ENCODE measurements at regions of chr7 and their contacts with region 1.

Region 1: DNA sequence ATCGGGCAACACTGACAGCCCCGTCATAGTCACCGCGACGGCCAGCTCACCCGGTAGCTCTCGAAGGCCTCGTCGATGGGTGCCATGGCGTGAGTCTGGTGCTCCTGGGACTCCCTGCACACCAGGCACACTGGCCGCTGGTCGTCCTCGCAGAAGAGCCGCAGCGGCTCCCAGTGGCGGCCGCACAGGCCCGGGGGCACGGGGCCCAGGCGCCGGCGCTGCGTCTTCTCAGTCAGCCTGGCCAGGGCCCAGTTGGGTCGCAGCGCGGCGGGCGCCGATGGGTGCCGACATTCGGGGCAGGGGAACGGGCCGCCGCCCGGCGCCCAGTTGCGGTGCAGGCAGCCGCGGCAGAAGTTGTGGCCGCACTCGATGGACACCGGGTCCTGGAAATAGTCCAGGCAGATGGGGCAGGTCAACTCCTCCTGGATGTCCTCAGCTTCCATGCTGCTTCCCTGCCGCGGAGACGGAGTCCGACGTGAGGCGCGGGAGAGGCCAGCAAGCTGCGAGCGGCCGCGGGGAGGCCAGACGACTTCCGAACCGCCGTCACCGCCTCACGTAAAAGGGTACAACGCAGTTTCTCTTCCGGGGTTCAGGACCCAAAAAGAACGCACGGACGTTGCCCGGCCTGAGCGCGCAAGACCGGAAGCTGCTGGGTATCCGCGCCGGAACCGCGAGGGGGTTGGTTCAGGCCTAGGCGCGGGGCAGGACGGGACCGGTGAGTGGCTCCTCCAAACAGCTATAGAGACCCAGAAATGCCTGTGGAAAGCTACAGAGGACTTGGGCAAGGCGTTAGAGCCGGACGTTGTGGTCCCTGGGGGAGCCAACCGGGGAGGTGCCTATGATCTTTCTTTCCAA is at the start of gene TRIM4:
- DNase-seq: peak; percentile 78 to 95 (median 86)
- ATAC-seq: peak; percentile 97
- H3K4me3 ChIP-seq: peak within 1 kb of the TSS; percentile 80
- H3K4me3 Mint-ChIP-seq: peak within 1 kb of the TSS; percentile 97
- H3K27ac ChIP-seq: peak within 1 kb of the TSS; percentile 78 to 80
- H3K27ac Mint-ChIP-seq: peak within 1 kb of the TSS; percentile 98
- H3K4me1 ChIP-seq: peaks cover 39% of the 10 kb centered on the region
- H3K4me1 Mint-ChIP-seq: peaks cover 61% of the 10 kb centered on the region
- H3K27me3 ChIP-seq: no peaks in the 10 kb centered on the region
- H3K27me3 Mint-ChIP-seq: no peaks in the 10 kb centered on the region
- CTCF ChIP-seq: peak; percentile 13
- total RNA-seq, gene TRIM4: 22.8 to 23.1 TPM

Region 2: GRCh38 chr7:99558306-99559174 is 360.6 kb before region 1 on chr7 and contains the start of gene ZNF655:
- CTCF ChIA-PET with region 1: no interaction called
- POLR2A ChIA-PET with region 1: interaction called, 26 read pairs
- intact Hi-C with region 1: no loop called
- DNase-seq: peak; percentile 83 to 96 (median 88)
- ATAC-seq: peak; percentile 79
- H3K4me3 ChIP-seq: peak within 1 kb of the TSS; percentile 98
- H3K4me3 Mint-ChIP-seq: peak within 1 kb of the TSS; percentile 93
- H3K27ac ChIP-seq: peak within 1 kb of the TSS; percentile 95 to 96
- H3K27ac Mint-ChIP-seq: peak within 1 kb of the TSS; percentile 95
- H3K4me1 ChIP-seq: peaks cover 45% of the 10 kb centered on the region
- H3K4me1 Mint-ChIP-seq: peaks cover 58% of the 10 kb centered on the region
- H3K27me3 ChIP-seq: no peaks in the 10 kb centered on the region
- H3K27me3 Mint-ChIP-seq: no peaks in the 10 kb centered on the region
- CTCF ChIP-seq: no peak
- total RNA-seq, gene ZNF655: 145 to 146 TPM

Region 3: DNA sequence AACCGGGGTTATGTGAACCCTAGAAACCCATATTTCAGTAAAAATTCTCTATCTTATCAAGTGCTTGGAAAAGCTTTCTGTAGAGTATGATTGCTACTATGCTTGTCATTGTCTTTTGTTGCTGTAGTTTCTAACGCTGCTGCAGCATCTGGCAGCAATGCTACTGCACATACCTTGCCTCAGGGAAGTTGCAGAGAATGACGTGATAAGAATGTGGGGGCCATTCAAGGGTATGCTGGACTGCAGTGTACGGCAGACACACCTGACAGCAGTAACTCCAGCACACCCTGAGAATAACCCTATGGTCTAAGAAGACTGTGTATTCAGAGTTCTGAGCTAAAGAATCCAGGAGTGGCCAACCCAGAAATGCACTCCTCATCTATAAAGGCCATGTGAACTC is 20.4 kb before region 1 on chr7:
- CTCF ChIA-PET with region 1: no interaction called
- POLR2A ChIA-PET with region 1: no interaction called
- intact Hi-C with region 1: no loop called
- DNase-seq: no peak
- ATAC-seq: no peak
- H3K4me3 ChIP-seq: no peak overlapping the region
- H3K4me3 Mint-ChIP-seq: no peak overlapping the region
- H3K27ac ChIP-seq: no peak overlapping the region
- H3K27ac Mint-ChIP-seq: no peak overlapping the region
- H3K4me1 ChIP-seq: peaks cover 7% of the 10 kb centered on the region
- H3K4me1 Mint-ChIP-seq: no peaks in the 10 kb centered on the region
- H3K27me3 ChIP-seq: no peaks in the 10 kb centered on the region
- H3K27me3 Mint-ChIP-seq: no peaks in the 10 kb centered on the region
- CTCF ChIP-seq: no peak

Region 4: DNA sequence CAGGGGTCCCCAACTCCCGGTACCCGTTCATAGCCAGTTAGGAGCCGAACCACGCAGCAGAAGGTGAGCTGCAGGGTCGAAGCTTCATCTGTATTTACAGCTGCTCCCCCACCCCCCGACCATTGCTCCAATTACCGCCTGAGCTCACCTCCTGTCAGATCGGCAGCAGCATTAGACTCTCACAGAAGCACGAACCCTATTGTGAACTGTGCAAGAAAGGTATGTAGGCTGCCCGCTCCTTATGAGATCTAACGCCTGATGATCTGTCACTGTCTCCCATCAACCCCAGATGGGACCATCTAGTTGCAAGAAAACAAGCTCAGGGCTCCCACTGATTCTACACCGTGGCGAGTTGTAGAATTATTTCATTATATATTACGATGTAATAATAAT is 71.3 kb after region 1 on chr7:
- CTCF ChIA-PET with region 1: interaction called, 14 read pairs
- POLR2A ChIA-PET with region 1: interaction called, 4 read pairs
- intact Hi-C with region 1: loop called in 1 of 2 experiments (anchors 1 kb)
- DNase-seq: no peak
- ATAC-seq: no peak
- H3K4me3 ChIP-seq: no peak overlapping the region
- H3K4me3 Mint-ChIP-seq: no peak overlapping the region
- H3K27ac ChIP-seq: no peak overlapping the region
- H3K27ac Mint-ChIP-seq: no peak overlapping the region
- H3K4me1 ChIP-seq: peaks cover 12% of the 10 kb centered on the region
- H3K4me1 Mint-ChIP-seq: peaks cover 5% of the 10 kb centered on the region
- H3K27me3 ChIP-seq: no peaks in the 10 kb centered on the region
- H3K27me3 Mint-ChIP-seq: no peaks in the 10 kb centered on the region
- CTCF ChIP-seq: no peak

Region 5: DNA sequence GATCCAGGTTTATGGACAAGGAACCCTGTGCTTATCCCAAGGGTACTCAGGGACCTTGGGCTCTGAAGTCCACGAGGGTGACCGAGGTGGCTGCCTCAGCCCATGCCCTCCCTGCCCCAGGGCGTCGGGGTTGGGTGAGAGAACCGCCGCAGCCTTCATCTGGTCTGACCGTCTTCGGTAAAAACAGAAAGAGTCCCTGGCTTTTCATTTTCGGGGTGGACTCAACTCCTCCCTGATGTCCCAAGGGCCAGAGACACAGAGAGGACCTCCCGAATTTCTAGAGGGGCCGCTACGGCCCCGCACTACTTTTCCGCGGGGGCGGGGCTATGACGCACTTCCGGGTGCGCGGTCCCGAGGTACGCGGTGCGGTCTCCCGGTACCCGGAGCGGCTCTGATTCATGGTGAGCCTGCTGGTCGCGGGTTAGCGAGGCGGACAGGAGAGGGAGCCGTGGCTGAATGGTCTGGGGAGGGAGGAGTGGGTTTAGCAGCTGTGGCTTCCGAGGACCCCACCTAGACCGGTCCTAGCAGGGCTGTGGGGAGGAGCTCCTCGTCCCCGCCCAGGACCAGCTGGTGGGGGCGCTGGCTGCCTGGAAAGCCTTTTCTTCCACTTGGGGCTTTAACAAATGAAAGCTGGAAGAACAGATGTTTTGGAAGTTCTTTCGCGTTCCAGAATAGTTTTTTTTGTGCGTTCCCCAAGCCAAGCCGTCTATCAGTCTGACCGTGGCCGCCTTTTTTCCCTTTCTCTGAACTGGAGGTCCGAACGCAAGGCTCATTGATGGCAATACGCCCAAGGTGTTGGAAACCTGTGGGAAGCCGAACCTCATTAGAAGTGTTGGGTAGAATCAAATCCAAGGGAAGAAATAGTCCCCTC is 130.5 kb after region 1 on chr7 and contains the start of gene ZSCAN21:
- CTCF ChIA-PET with region 1: no interaction called
- POLR2A ChIA-PET with region 1: interaction called, 14 read pairs
- intact Hi-C with region 1: loop called (anchors 5 to 10 kb)
- DNase-seq: peak; percentile 59 to 89 (median 74)
- ATAC-seq: peak; percentile 88
- H3K4me3 ChIP-seq: peak within 1 kb of the TSS; percentile 97
- H3K4me3 Mint-ChIP-seq: peak within 1 kb of the TSS; percentile 95
- H3K27ac ChIP-seq: peak within 1 kb of the TSS; percentile 77 to 88
- H3K27ac Mint-ChIP-seq: peak within 1 kb of the TSS; percentile 96
- H3K4me1 ChIP-seq: peaks cover 18% of the 10 kb centered on the region
- H3K4me1 Mint-ChIP-seq: peaks cover 25% of the 10 kb centered on the region
- H3K27me3 ChIP-seq: no peaks in the 10 kb centered on the region
- H3K27me3 Mint-ChIP-seq: no peaks in the 10 kb centered on the region
- CTCF ChIP-seq: peak; percentile 20
- total RNA-seq, gene ZSCAN21: 2.0 to 2.7 TPM

Region 6: DNA sequence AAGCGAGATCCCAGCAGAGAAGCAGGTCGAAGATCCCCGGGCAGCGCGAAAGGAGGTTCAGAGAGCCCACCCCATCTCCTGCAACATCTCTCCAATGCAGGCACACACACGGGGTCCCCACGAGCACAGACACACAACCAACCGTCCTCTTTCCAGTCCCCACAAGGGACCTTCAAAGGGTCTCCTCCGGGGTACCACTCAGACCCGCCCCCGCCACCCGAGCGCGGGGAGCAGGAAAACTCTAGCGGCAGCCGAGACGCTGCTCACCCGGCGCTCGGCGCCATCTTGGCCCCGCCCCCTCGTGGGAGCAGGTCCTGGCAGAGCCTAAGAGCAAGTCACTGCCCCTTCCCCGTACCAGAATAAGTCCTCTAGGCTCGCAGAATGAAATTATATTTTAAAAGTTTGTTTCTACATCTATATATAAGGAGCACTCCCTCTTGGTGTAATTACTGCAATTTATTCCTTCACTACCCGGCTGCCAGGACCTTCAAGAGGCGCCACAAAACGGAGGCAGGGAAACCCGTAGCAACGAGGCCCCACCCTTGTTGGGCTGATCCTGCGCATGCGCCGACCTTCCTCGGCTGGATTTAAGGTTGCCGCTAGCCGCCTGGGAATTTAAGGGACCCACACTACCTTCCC is 200.0 kb after region 1 on chr7 and contains the starts of genes CNPY4 and TAF6:
- CTCF ChIA-PET with region 1: no interaction called
- POLR2A ChIA-PET with region 1: interaction called, 11 read pairs
- intact Hi-C with region 1: no loop called
- DNase-seq: peak; percentile 90 to 98 (median 96)
- ATAC-seq: peak; percentile 70
- H3K4me3 ChIP-seq: peak within 1 kb of the TSS; percentile 93
- H3K4me3 Mint-ChIP-seq: peak within 1 kb of the TSS; percentile 98
- H3K27ac ChIP-seq: peak within 1 kb of the TSS; percentile 79 to 98
- H3K27ac Mint-ChIP-seq: peak within 1 kb of the TSS; percentile 97
- H3K4me1 ChIP-seq: peaks cover 31% of the 10 kb centered on the region
- H3K4me1 Mint-ChIP-seq: peaks cover 24% of the 10 kb centered on the region
- H3K27me3 ChIP-seq: no peaks in the 10 kb centered on the region
- H3K27me3 Mint-ChIP-seq: no peaks in the 10 kb centered on the region
- CTCF ChIP-seq: no peak
- total RNA-seq, gene CNPY4: 22.5 to 25.6 TPM
- total RNA-seq, gene TAF6: 34.8 to 37.4 TPM